Breast epithelium (tissue), 4 donors: ENCODE measurements at regions of chr2 and their contacts with region 1.

Region 1: GRCh38 chr2:84925724-84926376 is 20.4 kb downstream of the TMSB10 start:
- DNase-seq: peak; percentile 95 to 98
- H3K4me3 ChIP-seq: peak overlapping the region; percentile 31 to 60 (median 52)
- H3K27ac ChIP-seq: peak overlapping the region; percentile 65 to 68
- H3K4me1 ChIP-seq: no peaks in the 10 kb centered on the region
- H3K27me3 ChIP-seq: no peaks in the 10 kb centered on the region
- CTCF ChIP-seq: peak; percentile 97 to 99 (median 98)
- POLR2A ChIP-seq: no peak

Region 2: GRCh38 chr2:84879584-84880394 is 46.1 kb before region 1 on chr2:
- intact Hi-C with region 1: loop called (anchors 2 kb)
- DNase-seq: no peak
- H3K4me3 ChIP-seq: peak overlapping the region; percentile 43 to 85 (median 57)
- H3K27ac ChIP-seq: no peak overlapping the region
- H3K4me1 ChIP-seq: peaks cover 0 to 6% of the 10 kb centered on the region in 2 donors
- H3K27me3 ChIP-seq: peaks cover 6 to 7% of the 10 kb centered on the region in 2 donors
- CTCF ChIP-seq: no peak
- POLR2A ChIP-seq: no peak